AG04450 (cell line): ENCODE measurements at regions of chr5 and their contacts with region 1.

Region 1: GRCh38 chr5:58886315-58887207 is 303.7 kb downstream of the RAB3C start:
- DNase-seq: peak; percentile 37
- H3K4me3 ChIP-seq: no peak overlapping the region
- H3K27ac ChIP-seq: no peak overlapping the region
- H3K27me3 ChIP-seq: no peaks in the 10 kb centered on the region
- CTCF ChIP-seq: peak; percentile 93

Region 2: DNA sequence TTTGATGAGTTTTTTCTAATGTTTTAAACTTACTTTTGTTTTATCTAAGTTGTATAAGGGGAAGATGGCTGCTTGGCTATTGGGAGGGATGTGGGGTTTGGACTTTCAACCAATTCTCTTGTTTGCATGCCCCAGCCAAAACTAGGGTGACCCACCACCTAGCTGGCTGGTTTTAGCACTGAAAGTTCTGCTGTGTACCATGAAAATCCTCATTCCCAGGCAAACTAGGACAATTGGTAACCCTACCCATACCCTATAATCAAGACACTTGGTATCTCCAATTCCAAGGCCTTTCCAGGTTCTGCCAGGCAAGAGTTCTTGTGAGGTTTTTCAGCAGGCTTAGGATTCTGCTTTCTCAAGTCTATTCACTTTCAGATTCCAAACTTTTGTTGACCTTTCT is 290.6 kb before region 1 on chr5:
- CTCF ChIA-PET with region 1: no interaction called
- POLR2A ChIA-PET with region 1: no interaction called
- DNase-seq: no peak
- H3K4me3 ChIP-seq: no peak overlapping the region
- H3K27ac ChIP-seq: no peak overlapping the region
- H3K27me3 ChIP-seq: no peaks in the 10 kb centered on the region
- CTCF ChIP-seq: no peak

Region 3: DNA sequence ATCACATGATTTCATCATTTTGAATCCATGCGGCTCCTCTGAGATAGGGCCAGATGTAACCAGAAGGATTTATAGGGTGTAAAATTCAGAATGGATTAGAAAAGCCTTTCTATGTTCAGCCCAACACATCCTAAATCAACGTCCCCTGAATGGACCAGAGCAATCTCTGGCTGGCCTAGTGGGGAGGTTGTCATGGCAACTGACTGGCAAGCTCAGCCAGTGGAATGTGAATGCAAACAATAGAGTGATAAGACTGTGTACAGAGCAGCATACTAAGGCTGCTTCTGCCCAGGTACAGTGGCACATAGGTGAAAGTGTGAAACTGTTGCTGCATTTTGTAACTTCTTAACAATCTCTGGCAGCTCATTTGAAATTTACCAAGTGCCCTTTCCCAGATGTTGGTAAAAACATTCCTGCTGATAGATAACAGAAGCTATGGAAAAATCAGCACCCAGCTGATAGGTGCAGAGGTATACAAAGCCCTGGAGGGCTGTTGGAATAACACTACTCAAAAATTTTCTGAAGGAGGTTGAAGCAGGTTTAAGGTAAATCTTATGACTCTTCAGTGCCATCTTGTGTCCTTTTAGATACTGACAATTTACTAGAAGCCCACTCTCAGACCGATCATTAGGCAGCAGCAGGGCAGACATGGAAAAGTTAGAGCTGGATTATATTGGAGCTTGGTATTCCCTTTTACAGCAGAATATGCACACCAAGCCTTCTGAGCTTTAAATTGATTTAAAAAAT is 36.5 kb before region 1 on chr5:
- CTCF ChIA-PET with region 1: interaction called, 15 read pairs
- POLR2A ChIA-PET with region 1: no interaction called
- DNase-seq: no peak
- H3K4me3 ChIP-seq: no peak overlapping the region
- H3K27ac ChIP-seq: no peak overlapping the region
- H3K27me3 ChIP-seq: peaks cover 4% of the 10 kb centered on the region
- CTCF ChIP-seq: peak; percentile 53

Region 4: GRCh38 chr5:58902765-58903164 is 16.2 kb after region 1 on chr5:
- CTCF ChIA-PET with region 1: interaction called, 46 read pairs
- POLR2A ChIA-PET with region 1: no interaction called
- DNase-seq: no peak
- H3K4me3 ChIP-seq: no peak overlapping the region
- H3K27ac ChIP-seq: no peak overlapping the region
- H3K27me3 ChIP-seq: peaks cover 3% of the 10 kb centered on the region
- CTCF ChIP-seq: no peak

Region 5: DNA sequence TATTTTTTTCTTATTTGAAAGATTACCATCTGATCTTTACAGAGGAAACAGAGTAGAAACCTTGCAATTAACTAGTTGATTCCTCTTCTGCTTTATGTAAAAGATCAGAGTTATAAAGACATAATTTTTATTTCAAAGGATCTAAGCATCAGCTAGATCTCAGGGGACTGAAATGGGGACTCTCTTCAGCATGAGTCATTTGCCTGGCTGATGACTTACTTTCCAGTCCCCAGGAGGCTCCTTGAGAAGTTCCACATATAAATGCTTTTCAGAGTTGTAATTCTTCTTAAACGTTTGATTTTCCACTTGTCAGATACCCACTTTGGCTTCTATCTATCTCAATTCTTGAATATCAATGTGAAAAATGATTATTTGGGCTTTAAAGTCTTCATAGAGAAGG is 85.7 kb after region 1 on chr5:
- CTCF ChIA-PET with region 1: interaction called, 27 read pairs
- POLR2A ChIA-PET with region 1: no interaction called
- DNase-seq: no peak
- H3K4me3 ChIP-seq: no peak overlapping the region
- H3K27ac ChIP-seq: no peak overlapping the region
- H3K27me3 ChIP-seq: no peaks in the 10 kb centered on the region
- CTCF ChIP-seq: no peak

Region 6: DNA sequence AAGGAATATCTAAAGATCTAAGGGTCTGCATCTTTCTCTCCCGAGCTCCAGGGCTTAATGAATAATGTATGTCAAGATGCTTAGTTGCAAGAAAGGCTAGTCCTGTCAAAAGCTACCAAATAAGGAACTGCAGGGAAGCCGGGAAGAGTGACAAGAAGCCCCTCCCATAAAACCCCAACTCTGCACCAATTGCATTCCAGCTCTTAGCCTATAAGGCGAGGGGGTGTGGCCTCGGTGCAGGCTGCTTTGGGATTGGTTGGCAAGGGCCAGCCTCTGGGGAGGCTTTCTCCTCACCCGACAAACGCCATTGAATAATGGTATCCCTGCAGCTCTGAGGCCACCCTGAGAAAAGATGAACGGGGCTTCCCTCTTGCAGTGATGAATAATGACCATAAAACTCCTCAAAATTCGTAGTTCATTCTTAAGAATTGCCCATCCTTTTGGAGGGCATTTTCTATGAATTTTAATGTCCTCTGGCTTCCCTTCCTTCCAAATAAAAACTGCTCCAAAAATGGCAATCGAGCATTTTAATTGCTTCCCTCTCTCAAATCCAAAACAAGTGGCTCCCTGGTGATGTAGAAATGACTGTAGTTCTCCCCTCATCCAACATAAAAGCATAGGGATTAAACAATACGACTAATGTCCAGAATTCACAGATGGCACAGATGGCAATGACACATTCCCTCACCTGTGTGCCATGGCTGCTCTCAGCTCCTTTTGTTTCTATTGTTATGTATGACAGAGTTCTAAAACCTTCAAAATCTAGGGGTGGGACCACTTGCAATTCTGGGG is 113.4 kb after region 1 on chr5:
- CTCF ChIA-PET with region 1: interaction called, 30 read pairs
- POLR2A ChIA-PET with region 1: no interaction called
- DNase-seq: no peak
- H3K4me3 ChIP-seq: no peak overlapping the region
- H3K27ac ChIP-seq: no peak overlapping the region
- H3K27me3 ChIP-seq: no peaks in the 10 kb centered on the region
- CTCF ChIP-seq: no peak

Region 7: DNA sequence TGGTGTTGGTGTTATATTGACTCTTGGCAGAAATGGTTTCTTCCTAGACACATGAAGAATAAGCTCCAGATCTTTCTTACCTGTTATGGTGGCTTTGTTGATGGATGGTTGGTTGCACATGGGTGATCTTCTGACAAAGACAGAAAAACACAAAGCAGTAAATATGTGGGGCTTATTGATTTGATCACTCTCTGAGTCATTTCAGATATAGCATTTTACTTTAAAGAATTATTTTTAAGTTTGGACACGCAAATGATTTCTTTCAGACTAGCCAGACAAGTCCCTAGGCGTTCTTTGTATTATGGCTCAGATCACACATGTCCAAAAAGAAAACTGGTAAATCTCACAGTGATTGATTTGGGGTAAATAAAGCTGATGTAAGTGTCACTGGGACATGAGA is 294.0 kb after region 1 on chr5:
- CTCF ChIA-PET with region 1: interaction called, 187 read pairs
- POLR2A ChIA-PET with region 1: no interaction called
- DNase-seq: no peak
- H3K4me3 ChIP-seq: no peak overlapping the region
- H3K27ac ChIP-seq: no peak overlapping the region
- H3K27me3 ChIP-seq: no peaks in the 10 kb centered on the region
- CTCF ChIP-seq: no peak

Region 8: DNA sequence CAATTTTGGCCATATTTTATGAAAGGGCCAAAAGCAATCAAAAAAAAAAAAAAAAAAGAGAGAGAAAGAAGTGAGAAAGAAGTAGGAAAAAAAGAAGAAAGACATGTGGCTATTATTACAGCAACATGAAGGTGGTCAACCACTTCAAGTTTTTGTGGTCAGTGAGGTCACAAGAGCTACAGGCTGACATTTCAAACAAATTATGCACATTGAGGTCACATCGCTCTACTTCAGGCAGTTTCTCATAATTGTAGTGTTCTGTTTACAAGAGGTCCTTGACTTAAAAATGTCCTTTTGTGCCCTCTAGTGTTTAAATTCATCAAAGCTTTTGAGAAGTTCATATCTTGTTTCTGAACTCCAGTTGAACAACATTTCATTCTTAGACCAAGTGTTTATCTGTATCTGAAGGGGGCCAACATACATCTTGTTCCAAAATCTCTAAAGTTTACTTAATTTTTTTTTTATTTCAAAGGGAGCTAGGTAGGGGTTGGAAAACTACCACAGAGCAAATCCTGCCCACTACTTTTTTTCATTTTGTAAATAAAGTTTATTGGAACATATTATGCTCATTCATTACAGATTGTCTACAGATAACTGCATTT is 493.9 kb after region 1 on chr5:
- CTCF ChIA-PET with region 1: interaction called, 12 read pairs
- POLR2A ChIA-PET with region 1: interaction called, 4 read pairs
- DNase-seq: peak; percentile 21
- H3K4me3 ChIP-seq: no peak overlapping the region
- H3K27ac ChIP-seq: no peak overlapping the region
- H3K27me3 ChIP-seq: no peaks in the 10 kb centered on the region
- CTCF ChIP-seq: peak; percentile 57

Region 9: DNA sequence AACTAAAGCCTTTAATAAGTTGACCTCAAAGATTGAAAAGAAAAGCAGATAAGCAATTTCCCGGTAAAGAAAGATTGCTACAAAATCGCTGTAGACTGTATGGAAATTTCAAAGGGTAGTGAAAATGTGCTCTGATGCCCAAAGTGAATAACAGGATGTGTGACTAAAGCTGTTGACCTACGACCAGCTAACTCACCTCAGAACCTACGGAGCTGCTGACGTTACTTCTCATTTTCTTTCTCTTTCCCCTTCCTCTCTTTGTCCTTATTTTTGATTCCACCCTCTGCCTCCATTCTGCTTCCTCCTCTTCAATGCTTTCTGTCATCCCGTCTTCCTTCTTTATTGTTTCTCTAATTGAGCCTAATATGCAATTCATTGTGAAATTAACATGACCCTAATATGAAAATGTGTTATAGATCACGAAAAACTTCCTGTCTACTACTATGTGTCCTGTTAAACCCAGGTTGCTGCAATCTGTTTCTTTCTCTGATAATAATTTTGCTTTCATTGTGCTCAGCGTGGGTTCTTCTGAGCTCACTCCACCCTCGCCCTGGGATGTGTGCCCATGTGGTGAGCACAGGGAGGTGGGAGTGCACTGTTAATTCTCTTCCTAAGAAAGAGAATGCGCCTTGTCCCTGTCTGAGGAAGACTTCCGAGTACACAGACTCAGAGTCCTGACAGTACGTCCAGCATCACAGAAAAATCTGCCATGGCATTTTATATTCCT is 904.0 kb after region 1 on chr5:
- CTCF ChIA-PET with region 1: no interaction called
- POLR2A ChIA-PET with region 1: no interaction called
- DNase-seq: no peak
- H3K4me3 ChIP-seq: no peak overlapping the region
- H3K27ac ChIP-seq: no peak overlapping the region
- H3K27me3 ChIP-seq: no peaks in the 10 kb centered on the region
- CTCF ChIP-seq: no peak